Dorsolateral prefrontal cortex (tissue), 120 donors: ENCODE measurements at regions of chr12 and their contacts with region 1.

Region 1: GRCh38 chr12:3003357-3003992 is 44.3 kb downstream of the TEAD4 start:
- DNase-seq: no peak
- H3K4me3 ChIP-seq: no peak overlapping the region
- H3K27ac ChIP-seq: no peak overlapping the region
- H3K27me3 ChIP-seq: no peaks in the 10 kb centered on the region
- CTCF ChIP-seq: no peak

Region 2: GRCh38 chr12:2163172-2163941 is 840.1 kb before region 1 on chr12:
- intact Hi-C with region 1: no loop called
- DNase-seq: peak in 3 of 10 donors; percentile 33 to 46 (median 46)
- H3K4me3 ChIP-seq: no peak overlapping the region
- H3K27ac ChIP-seq: peak overlapping the region in 29 of 59 donors; percentile 5 to 80 (median 45)
- H3K27me3 ChIP-seq: no peaks in the 10 kb centered on the region
- CTCF ChIP-seq: no peak

Region 3: DNA sequence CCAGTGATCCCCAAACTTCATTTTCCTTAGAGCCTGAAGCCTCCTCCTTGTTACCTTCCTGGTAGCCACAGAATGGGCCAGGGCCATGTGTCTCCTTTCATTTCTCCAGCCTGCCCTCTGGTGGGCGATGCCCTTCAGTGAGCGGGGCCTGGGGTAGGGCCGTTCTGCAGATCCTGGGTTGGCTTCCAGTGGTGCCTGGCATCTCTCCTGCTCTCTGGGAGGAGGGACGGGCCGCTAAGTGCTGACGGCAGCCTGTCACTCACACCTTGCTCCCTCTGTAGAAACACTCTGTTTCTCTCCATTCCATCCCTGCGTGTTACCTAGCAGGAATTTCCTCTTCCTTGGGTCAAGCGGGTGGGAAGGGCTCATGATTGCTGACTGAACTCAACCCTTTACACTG is 718.6 kb before region 1 on chr12:
- intact Hi-C with region 1: no loop called
- DNase-seq: peak in 8 of 10 donors; percentile 41 to 74 (median 62)
- H3K4me3 ChIP-seq: no peak overlapping the region
- H3K27ac ChIP-seq: peak overlapping the region in 3 of 59 donors; percentile 8 to 28 (median 22)
- H3K27me3 ChIP-seq: no peaks in the 10 kb centered on the region
- CTCF ChIP-seq: peak in 54 of 56 donors; percentile 35 to 72 (median 62)

Region 4: DNA sequence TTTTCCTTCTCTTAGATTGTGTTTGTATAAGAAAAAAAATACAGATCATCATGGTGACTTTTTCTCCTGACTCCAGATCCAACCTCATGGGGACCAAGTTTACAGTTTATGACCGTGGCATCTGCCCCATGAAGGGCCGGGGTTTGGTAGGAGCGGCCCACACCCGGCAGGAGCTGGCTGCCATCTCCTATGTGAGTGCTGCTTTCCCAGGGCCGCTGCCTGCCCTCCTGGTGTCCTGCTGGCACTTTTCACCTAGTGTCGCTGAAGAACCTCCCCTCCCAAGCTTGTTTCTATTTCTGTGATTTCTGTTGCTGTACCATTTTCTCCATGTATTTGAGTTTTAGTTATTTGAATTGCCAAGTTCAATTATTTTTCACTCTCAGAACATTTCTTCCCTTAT is 69.1 kb before region 1 on chr12:
- intact Hi-C with region 1: loop called in 1 of 2 experiments (anchors 2 kb)
- DNase-seq: peak in 1 of 10 donors; percentile 59
- H3K4me3 ChIP-seq: no peak overlapping the region
- H3K27ac ChIP-seq: peak overlapping the region in 1 of 59 donors; percentile 53
- H3K27me3 ChIP-seq: no peaks in the 10 kb centered on the region
- CTCF ChIP-seq: no peak